PC-3 (cell line): ENCODE measurements at regions of chr13 and their contacts with region 1.

Region 1: DNA sequence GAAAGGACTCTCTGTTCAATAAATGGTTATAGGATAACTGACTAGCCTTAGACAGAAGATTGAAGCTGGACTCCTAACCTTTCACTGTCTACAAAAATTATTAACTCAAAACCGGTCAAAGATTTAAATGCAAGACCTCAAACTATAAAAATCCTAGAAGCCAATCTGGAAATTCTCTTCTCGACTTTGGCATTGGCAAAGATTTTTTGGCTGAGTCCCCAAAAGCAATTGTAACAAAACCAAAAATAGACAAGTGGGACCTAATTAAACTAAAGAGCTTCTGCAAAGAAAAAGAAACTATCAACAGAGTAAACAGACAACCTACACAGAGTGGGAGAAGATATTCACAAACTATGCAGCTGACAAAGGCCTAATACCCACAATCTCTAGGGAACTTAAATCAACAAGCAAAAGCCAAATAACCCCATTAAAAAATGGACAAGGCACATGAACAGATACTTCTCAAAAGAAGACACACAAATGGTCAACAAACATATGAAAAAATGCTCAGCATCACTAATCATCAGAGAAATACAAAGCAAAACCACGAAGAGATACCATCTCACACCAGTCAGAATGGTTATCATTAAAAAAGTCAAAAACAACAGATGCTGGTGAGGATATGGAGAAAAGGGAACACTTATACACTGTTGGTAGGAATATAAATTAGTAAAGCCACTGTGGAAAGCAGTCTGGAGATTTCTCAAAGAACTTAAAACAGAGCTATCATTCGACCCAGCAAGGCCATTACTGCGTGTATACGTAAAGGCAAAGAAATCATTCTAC is 266.3 kb downstream of the DNAJC15 start:
- DNase-seq: no peak
- ATAC-seq: no peak
- H3K4me3 ChIP-seq: no peak overlapping the region
- H3K27ac ChIP-seq: no peak overlapping the region
- H3K4me1 ChIP-seq: peaks cover 40% of the 10 kb centered on the region
- H3K27me3 ChIP-seq: no peaks in the 10 kb centered on the region
- CTCF ChIP-seq: no peak

Region 2: GRCh38 chr13:43245374-43245964 is 44.2 kb before region 1 on chr13:
- CTCF ChIA-PET with region 1: no interaction called
- POLR2A ChIA-PET with region 1: no interaction called
- intact Hi-C with region 1: loop called (anchors 5 kb)
- DNase-seq: peak; percentile 77
- ATAC-seq: peak; percentile 90
- H3K4me3 ChIP-seq: no peak overlapping the region
- H3K27ac ChIP-seq: peak overlapping the region; percentile 80
- H3K4me1 ChIP-seq: peaks cover 24% of the 10 kb centered on the region
- H3K27me3 ChIP-seq: no peaks in the 10 kb centered on the region
- CTCF ChIP-seq: no peak

Region 3: DNA sequence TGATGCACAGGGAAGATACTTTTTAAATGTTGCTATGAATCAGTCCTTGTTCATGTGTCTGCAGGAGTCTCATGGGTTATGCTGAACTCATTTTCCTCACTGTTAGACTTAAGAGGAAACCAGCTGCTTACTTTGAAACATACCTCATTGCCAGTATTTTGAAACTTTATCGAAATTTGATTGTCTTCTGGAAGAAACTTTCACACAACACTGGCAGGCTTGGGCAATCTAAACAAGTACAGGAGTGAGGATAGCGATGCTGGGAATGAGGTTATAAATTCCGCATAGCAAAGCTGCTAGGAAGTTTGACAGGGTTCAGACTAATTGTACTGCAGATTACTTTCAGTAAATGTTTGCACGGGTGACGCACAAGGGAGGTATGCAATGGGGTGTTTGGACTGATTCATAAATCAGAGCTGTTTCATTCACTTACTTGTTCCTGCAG is 20.6 kb before region 1 on chr13:
- CTCF ChIA-PET with region 1: interaction called, 3 read pairs
- POLR2A ChIA-PET with region 1: no interaction called
- intact Hi-C with region 1: loop called (anchors 2 kb)
- DNase-seq: peak; percentile 90
- ATAC-seq: peak; percentile 94
- H3K4me3 ChIP-seq: peak overlapping the region; percentile 43
- H3K27ac ChIP-seq: peak overlapping the region; percentile 80
- H3K4me1 ChIP-seq: peaks cover 38% of the 10 kb centered on the region
- H3K27me3 ChIP-seq: no peaks in the 10 kb centered on the region
- CTCF ChIP-seq: no peak

Region 4: GRCh38 chr13:43422116-43422515 is 132.5 kb after region 1 on chr13:
- CTCF ChIA-PET with region 1: no interaction called
- POLR2A ChIA-PET with region 1: no interaction called
- intact Hi-C with region 1: no loop called
- DNase-seq: no peak
- ATAC-seq: no peak
- H3K4me3 ChIP-seq: no peak overlapping the region
- H3K27ac ChIP-seq: no peak overlapping the region
- H3K4me1 ChIP-seq: no peaks in the 10 kb centered on the region
- H3K27me3 ChIP-seq: no peaks in the 10 kb centered on the region
- CTCF ChIP-seq: no peak